K562 (cell line): ENCODE measurements at regions of chr7 and their contacts with region 1.

Region 1: GRCh38 chr7:116588641-116589594 is 64.1 kb downstream of the CAV1 start:
- DNase-seq: peak; percentile 52 to 75 (median 64)
- ATAC-seq: peak; percentile 85
- H3K4me3 ChIP-seq: no peak overlapping the region
- H3K27ac ChIP-seq: no peak overlapping the region
- H3K4me1 ChIP-seq: peaks cover 0 to 9% of the 10 kb centered on the region in 2 experiments; a peak in 3 of 5 replicates
- H3K27me3 ChIP-seq: peaks cover 10% of the 10 kb centered on the region in 2 experiments; a peak in 3 of 5 replicates
- CTCF ChIP-seq: peak; percentile 45 to 95 (median 65); a peak in 4 of 6 replicates
- EP300 ChIP-seq: no peak
- POLR2A ChIP-seq: no peak
- RAD21 ChIP-seq: peak; percentile 98

Region 2: DNA sequence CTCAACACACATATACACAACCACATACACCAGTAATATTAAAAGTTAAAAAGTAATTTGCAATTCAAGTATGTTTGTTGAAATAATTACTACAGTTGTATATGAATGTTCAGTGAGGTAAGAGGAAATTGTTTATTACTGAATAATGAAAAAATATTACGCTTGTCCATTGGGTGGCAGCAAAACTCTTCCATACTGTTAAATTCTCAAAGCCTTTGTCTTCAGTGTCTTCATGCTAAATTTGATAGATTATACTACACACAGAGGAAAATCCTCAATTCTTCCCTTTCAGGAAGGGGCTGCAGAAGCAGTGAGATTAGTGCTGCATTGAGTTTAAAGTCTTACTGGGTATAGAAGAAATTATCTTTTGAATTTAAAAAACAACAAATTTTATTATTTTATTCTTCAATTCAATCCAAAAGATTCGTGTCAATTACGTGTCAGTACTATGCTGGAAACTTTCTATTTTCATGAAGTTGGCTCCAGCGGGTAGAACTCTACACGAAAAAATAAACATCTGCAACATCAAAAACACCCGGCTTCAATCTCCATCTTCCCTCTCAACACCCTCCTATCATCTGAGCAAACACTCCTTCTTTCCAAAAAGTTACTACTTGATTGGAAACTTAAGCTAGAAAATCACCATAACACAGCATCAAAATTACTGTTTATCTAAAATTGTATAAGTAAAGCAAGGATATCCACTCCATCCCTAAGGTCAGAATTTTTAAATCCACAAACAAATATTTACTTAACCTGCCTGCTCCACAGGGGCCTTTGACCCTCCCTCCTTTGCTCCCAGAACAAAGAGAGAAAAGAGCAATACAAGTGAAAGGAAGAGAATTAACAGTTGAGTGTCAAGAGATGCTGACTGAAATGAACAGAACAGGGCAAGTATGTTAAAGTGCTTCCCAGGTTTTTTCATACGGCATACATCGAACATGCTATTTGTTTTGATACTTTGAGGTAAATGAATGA is 415.6 kb before region 1 on chr7:
- CTCF ChIA-PET with region 1: interaction called, 13 read pairs
- POLR2A ChIA-PET with region 1: no interaction called
- in situ Hi-C with region 1: no loop called
- intact Hi-C with region 1: loop called (anchors 1 kb)
- DNase-seq: peak; percentile 36 to 72 (median 41)
- ATAC-seq: peak; percentile 79
- H3K4me3 ChIP-seq: no peak overlapping the region
- H3K27ac ChIP-seq: no peak overlapping the region
- H3K4me1 ChIP-seq: no peaks in the 10 kb centered on the region
- H3K27me3 ChIP-seq: no peaks in the 10 kb centered on the region
- CTCF ChIP-seq: peak; percentile 48 to 89 (median 54); a peak in 5 of 6 replicates
- EP300 ChIP-seq: no peak
- POLR2A ChIP-seq: no peak
- RAD21 ChIP-seq: peak; percentile 95 to 96

Region 3: GRCh38 chr7:116340943-116341907 is 247.7 kb before region 1 on chr7:
- CTCF ChIA-PET with region 1: no interaction called
- POLR2A ChIA-PET with region 1: no interaction called
- in situ Hi-C with region 1: no loop called
- intact Hi-C with region 1: loop called (anchors 5 kb)
- DNase-seq: peak in 2 of 4 experiments; percentile 32 to 53
- ATAC-seq: peak; percentile 96
- H3K4me3 ChIP-seq: no peak overlapping the region
- H3K27ac ChIP-seq: no peak overlapping the region
- H3K4me1 ChIP-seq: peaks cover 0 to 16% of the 10 kb centered on the region in 2 experiments; a peak in 3 of 5 replicates
- H3K27me3 ChIP-seq: no peaks in the 10 kb centered on the region
- CTCF ChIP-seq: peak; percentile 57 to 59 (median 57)
- EP300 ChIP-seq: no peak
- POLR2A ChIP-seq: no peak
- RAD21 ChIP-seq: peak; percentile 74 to 79

Region 4: GRCh38 chr7:116525913-116526861 is 62.7 kb before region 1 on chr7:
- CTCF ChIA-PET with region 1: interaction called, 3 read pairs
- POLR2A ChIA-PET with region 1: no interaction called
- in situ Hi-C with region 1: no loop called
- intact Hi-C with region 1: loop called (anchors 2 kb)
- DNase-seq: peak; percentile 88 to 94 (median 94)
- ATAC-seq: peak; percentile 97
- H3K4me3 ChIP-seq: peak overlapping the region; percentile 50
- H3K27ac ChIP-seq: no peak overlapping the region
- H3K4me1 ChIP-seq: peaks cover 21 to 24% of the 10 kb centered on the region in 2 experiments
- H3K27me3 ChIP-seq: peaks cover 0 to 7% of the 10 kb centered on the region in 2 experiments; a peak in 2 of 5 replicates
- CTCF ChIP-seq: peak; percentile 77 to 91 (median 80)
- EP300 ChIP-seq: no peak
- POLR2A ChIP-seq: no peak
- RAD21 ChIP-seq: peak; percentile 96 to 98

Region 5: GRCh38 chr7:117127585-117128168 is 538.8 kb after region 1 on chr7:
- CTCF ChIA-PET with region 1: no interaction called
- POLR2A ChIA-PET with region 1: no interaction called
- in situ Hi-C with region 1: no loop called
- intact Hi-C with region 1: loop called (anchors 10 kb)
- DNase-seq: peak; percentile 34 to 80 (median 55)
- ATAC-seq: peak; percentile 79
- H3K4me3 ChIP-seq: no peak overlapping the region
- H3K27ac ChIP-seq: no peak overlapping the region
- H3K4me1 ChIP-seq: peaks cover 0 to 15% of the 10 kb centered on the region in 2 experiments; a peak in 3 of 5 replicates
- H3K27me3 ChIP-seq: no peaks in the 10 kb centered on the region
- CTCF ChIP-seq: peak; percentile 57 to 90 (median 70); a peak in 5 of 6 replicates
- EP300 ChIP-seq: no peak
- POLR2A ChIP-seq: no peak
- RAD21 ChIP-seq: peak; percentile 82 to 90

Region 6: GRCh38 chr7:117219485-117219884 is 630.6 kb after region 1 on chr7:
- CTCF ChIA-PET with region 1: no interaction called
- POLR2A ChIA-PET with region 1: no interaction called
- in situ Hi-C with region 1: no loop called
- intact Hi-C with region 1: no loop called
- DNase-seq: no peak
- ATAC-seq: no peak
- H3K4me3 ChIP-seq: no peak overlapping the region
- H3K27ac ChIP-seq: no peak overlapping the region
- H3K4me1 ChIP-seq: no peaks in the 10 kb centered on the region
- H3K27me3 ChIP-seq: no peaks in the 10 kb centered on the region
- CTCF ChIP-seq: no peak
- EP300 ChIP-seq: no peak
- POLR2A ChIP-seq: no peak
- RAD21 ChIP-seq: no peak